Naive thymus-derived CD4-positive, alpha-beta T cell (primary cell): ENCODE measurements at regions of chr15 and their contacts with region 1.

Region 1: DNA sequence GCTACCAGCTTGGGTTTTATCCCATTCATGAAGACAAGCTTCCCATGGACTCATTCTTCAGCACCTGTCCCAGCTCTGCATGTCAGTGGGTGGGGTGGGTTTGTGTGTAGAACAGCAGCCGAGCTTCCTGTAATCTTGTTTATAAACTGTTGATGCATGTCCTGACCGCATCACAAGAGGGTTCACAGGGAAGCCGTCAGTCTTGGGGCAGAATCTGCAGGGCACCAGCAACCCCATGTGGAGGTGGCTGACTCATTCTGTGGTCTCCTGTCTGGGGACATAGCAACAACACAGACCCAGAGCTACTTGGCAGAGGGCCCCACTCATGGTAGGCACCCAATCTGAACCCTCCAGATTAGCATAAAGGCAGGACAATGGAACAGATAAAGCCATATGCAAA is 35.6 kb downstream of the DAPK2 start:
- DNase-seq: peak; percentile 43 to 92 (median 85)
- ATAC-seq: peak; percentile 98
- H3K4me3 ChIP-seq: no peak overlapping the region
- H3K4me3 Mint-ChIP-seq: peak overlapping the region; percentile 32 to 87 (median 62)
- H3K27ac ChIP-seq: peak overlapping the region; percentile 32
- H3K27ac Mint-ChIP-seq: peak overlapping the region; percentile 87 to 98 (median 95)
- H3K4me1 ChIP-seq: peaks cover 24 to 27% of the 10 kb centered on the region in 2 donors
- H3K4me1 Mint-ChIP-seq: peaks cover 20 to 64% (median 30%) of the 10 kb centered on the region in 7 donors
- H3K27me3 ChIP-seq: no peaks in the 10 kb centered on the region
- H3K27me3 Mint-ChIP-seq: peaks cover 0 to 3% (median 0%) of the 10 kb centered on the region in 5 donors

Region 2: DNA sequence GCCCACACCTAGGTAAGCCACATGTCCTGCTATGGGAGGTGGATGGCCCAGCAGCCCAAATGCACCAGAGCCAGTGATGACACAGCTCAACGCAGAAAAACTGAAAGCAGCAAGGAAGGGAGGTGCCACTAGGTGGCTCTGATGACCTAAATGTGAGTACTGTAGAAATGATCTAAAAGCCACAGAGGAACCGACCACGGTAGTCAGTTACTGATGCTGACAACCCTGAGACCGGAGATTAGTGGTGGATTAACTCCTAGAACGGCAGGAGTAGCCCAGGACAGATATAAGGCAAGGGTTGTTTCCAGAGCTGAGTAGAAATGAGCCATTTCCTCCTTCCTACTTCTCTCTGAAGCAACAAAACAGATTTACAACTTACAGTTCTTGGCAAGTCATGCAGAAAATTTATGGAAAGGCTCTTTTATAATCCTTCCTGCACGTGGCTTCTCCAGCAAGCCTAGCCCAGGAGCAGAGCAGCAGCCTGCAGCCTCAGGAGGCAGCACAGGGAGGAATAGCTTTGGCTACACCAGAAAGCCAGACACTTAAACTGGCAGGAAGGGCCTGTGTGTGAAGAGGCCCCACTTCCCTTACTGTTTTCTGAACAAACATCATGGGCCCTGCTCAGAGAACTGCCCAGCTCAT is 400.4 kb before region 1 on chr15:
- CTCF ChIA-PET with region 1: interaction called, 3 read pairs
- POLR2A ChIA-PET with region 1: no interaction called
- intact Hi-C with region 1: loop called in 1 of 2 experiments (anchors 1 kb)
- DNase-seq: peak in 8 of 9 donors; percentile 43 to 71 (median 64)
- ATAC-seq: peak; percentile 94
- H3K4me3 ChIP-seq: no peak overlapping the region
- H3K4me3 Mint-ChIP-seq: peak overlapping the region in 7 of 10 donors; percentile 9 to 68 (median 42)
- H3K27ac ChIP-seq: peak overlapping the region; percentile 69
- H3K27ac Mint-ChIP-seq: peak overlapping the region; percentile 74 to 94 (median 84)
- H3K4me1 ChIP-seq: peaks cover 23 to 25% of the 10 kb centered on the region in 2 donors
- H3K4me1 Mint-ChIP-seq: peaks cover 23 to 51% (median 41%) of the 10 kb centered on the region in 7 donors
- H3K27me3 ChIP-seq: no peaks in the 10 kb centered on the region
- H3K27me3 Mint-ChIP-seq: no peaks in the 10 kb centered on the region

Region 3: DNA sequence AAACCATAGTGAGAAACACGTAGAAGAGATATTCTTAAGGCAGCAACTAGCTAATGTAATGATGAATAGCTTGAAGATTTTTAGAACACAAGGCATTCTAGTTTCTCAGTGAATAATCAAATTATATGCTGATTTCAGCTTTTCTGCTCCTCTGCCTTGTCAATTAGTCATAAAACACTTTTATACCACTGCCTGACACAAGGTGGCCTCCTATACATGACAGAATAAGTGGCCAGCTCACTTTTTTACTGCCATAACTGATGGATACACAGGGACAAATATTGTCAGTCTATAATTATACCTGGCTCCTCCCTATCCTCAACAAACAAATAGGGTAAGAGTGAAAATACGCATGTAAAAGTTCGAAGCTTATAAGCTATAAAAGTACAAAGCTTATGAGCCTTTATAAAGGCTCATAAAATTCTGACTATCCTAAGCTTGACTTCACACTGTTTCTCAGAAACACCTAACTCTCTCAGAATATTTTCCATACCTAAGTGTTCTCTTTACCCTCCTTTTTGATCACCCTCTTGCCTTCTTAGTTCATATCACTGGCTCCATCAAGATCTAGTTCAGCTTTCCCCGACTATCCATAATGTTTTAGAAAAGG is 258.5 kb before region 1 on chr15:
- CTCF ChIA-PET with region 1: interaction called, 26 read pairs
- POLR2A ChIA-PET with region 1: interaction called, 3 read pairs
- intact Hi-C with region 1: loop called (anchors 1 to 2 kb)
- DNase-seq: peak in 7 of 9 donors; percentile 39 to 70 (median 59)
- ATAC-seq: peak; percentile 93
- H3K4me3 ChIP-seq: no peak overlapping the region
- H3K4me3 Mint-ChIP-seq: no peak overlapping the region
- H3K27ac ChIP-seq: no peak overlapping the region
- H3K27ac Mint-ChIP-seq: peak overlapping the region in 7 of 9 donors; percentile 5 to 83 (median 63)
- H3K4me1 ChIP-seq: no peaks in the 10 kb centered on the region
- H3K4me1 Mint-ChIP-seq: peaks cover 0 to 9% (median 2%) of the 10 kb centered on the region in 7 donors
- H3K27me3 ChIP-seq: no peaks in the 10 kb centered on the region
- H3K27me3 Mint-ChIP-seq: no peaks in the 10 kb centered on the region

Region 4: DNA sequence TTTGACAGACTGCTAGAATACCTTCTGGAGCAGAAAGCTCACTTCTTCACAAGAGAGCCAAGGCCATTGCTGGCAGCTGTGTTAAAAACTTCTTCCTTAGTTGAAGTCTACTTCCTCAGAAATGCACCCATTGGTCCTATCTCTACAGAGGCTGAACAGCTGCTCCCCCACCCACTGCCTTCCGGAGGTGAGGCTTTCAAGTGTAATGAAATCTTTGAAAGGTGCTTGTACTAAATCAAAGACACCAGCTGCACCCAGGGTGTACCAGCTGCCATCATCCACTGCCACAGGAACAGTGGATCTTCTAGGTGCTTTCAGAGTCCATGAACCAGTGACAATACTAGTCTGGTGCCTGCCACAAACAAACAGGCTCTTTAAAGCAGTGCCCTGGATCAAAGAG is 150.6 kb before region 1 on chr15:
- CTCF ChIA-PET with region 1: no interaction called
- POLR2A ChIA-PET with region 1: interaction called, 3 read pairs
- intact Hi-C with region 1: loop called in 1 of 2 experiments (anchors 1 kb)
- DNase-seq: peak; percentile 27 to 90 (median 83)
- ATAC-seq: peak; percentile 95
- H3K4me3 ChIP-seq: no peak overlapping the region
- H3K4me3 Mint-ChIP-seq: peak overlapping the region; percentile 54 to 85 (median 76)
- H3K27ac ChIP-seq: peak overlapping the region; percentile 76
- H3K27ac Mint-ChIP-seq: peak overlapping the region; percentile 87 to 99 (median 97)
- H3K4me1 ChIP-seq: peaks cover 7 to 42% of the 10 kb centered on the region in 2 donors
- H3K4me1 Mint-ChIP-seq: peaks cover 29 to 78% (median 73%) of the 10 kb centered on the region in 7 donors
- H3K27me3 ChIP-seq: no peaks in the 10 kb centered on the region
- H3K27me3 Mint-ChIP-seq: no peaks in the 10 kb centered on the region

Region 5: GRCh38 chr15:63945007-63945788 is 65.5 kb before region 1 on chr15:
- CTCF ChIA-PET with region 1: interaction called, 8 read pairs
- POLR2A ChIA-PET with region 1: no interaction called
- intact Hi-C with region 1: loop called (anchors 1 kb)
- DNase-seq: peak; percentile 21 to 68 (median 48)
- ATAC-seq: peak; percentile 94
- H3K4me3 ChIP-seq: no peak overlapping the region
- H3K4me3 Mint-ChIP-seq: no peak overlapping the region
- H3K27ac ChIP-seq: no peak overlapping the region
- H3K27ac Mint-ChIP-seq: peak overlapping the region in 5 of 9 donors; percentile 5 to 75 (median 15)
- H3K4me1 ChIP-seq: peaks cover 0 to 6% of the 10 kb centered on the region in 2 donors
- H3K4me1 Mint-ChIP-seq: peaks cover 1 to 33% (median 6%) of the 10 kb centered on the region in 7 donors
- H3K27me3 ChIP-seq: no peaks in the 10 kb centered on the region
- H3K27me3 Mint-ChIP-seq: no peaks in the 10 kb centered on the region

Region 6: DNA sequence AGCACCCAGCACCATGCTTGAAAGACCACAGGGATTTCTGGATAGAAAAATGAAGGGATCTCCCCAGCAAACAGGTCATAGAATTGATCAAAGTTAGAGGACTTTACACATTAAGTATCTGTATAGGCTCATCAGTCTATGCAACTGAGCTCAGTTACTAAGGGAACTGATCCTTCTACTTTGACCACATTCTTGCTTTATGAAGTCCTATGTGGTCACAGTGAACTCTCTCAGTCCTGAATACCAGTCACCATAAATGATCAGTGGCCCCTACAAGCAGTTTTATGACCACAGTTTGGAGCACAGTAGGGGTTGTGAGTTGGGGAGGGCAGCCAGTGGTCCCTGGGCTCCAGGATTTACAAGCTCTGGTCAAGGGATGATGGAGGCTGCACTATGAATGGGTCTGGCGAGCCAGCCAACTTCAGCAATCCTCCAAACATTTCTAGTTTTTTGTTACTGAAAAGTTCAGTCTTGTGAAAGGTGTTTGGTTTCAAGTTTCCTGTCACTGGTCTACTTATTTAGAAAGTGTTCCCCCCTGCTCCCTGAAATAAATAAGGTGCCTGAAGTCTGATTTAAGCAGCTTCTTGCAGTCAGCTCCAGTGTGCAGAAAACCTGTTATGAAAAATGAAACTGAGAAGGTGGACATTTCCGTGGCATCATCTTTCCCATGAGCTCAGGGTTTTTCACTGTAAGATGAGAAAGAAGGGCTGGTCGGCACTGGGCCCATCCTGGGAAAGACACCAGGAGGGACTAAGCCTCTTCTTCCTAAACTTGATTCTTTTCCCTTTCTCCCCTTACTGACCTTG is 39.9 kb before region 1 on chr15:
- CTCF ChIA-PET with region 1: interaction called, 5 read pairs
- POLR2A ChIA-PET with region 1: no interaction called
- intact Hi-C with region 1: loop called in 1 of 2 experiments (anchors 1 kb)
- DNase-seq: peak in 4 of 9 donors; percentile 3 to 44 (median 10)
- ATAC-seq: peak; percentile 52
- H3K4me3 ChIP-seq: peak overlapping the region; percentile 17
- H3K4me3 Mint-ChIP-seq: peak overlapping the region; percentile 6 to 87 (median 54)
- H3K27ac ChIP-seq: peak overlapping the region; percentile 1
- H3K27ac Mint-ChIP-seq: peak overlapping the region; percentile 73 to 99 (median 83)
- H3K4me1 ChIP-seq: peaks cover 20 to 24% of the 10 kb centered on the region in 2 donors
- H3K4me1 Mint-ChIP-seq: peaks cover 24 to 46% (median 30%) of the 10 kb centered on the region in 7 donors
- H3K27me3 ChIP-seq: no peaks in the 10 kb centered on the region
- H3K27me3 Mint-ChIP-seq: no peaks in the 10 kb centered on the region

Region 7: DNA sequence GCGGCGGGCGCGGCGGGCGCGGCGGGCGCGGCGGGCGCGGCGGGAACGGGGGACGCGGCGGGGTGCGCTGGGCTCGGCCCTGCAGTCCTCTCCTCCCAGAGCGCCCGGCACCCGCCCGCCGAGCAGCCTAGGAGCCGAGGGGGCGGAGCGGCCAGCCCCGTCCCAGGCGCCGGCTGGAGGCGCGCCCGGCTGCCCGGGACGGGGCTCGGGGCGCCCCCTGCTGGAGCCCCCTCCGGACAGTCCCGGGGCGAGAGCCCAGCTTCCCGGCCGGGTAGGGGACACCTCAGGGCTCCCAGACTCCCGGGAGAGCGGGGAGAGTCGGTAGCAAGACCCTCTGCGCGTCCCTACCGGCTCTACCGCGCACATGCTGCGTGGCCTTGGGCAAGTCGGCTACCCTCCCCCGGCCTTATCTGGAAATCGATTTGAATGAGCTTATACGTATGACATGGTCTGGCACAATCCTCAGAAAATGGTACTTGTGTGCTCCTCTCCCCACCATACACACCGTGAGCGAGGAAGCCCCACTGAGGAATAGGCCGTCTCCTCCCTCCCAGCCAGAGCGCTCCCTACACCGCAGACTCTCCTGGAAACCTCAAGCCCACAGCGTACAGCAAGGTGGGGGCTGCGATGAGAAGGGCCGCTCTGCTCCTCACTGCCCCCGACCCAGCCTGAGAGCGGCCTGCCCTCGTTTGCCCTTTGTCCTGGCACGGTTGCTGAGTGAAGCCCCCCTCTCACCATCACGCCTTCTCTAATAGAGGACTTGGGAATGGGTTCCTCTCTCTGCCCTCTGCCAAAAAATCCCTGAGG is 35.8 kb after region 1 on chr15 and contains the start of gene DAPK2:
- CTCF ChIA-PET with region 1: interaction called, 4 read pairs
- POLR2A ChIA-PET with region 1: no interaction called
- intact Hi-C with region 1: loop called in 1 of 2 experiments (anchors 1 kb)
- DNase-seq: peak; percentile 29 to 83 (median 63)
- ATAC-seq: peak; percentile 91
- H3K4me3 ChIP-seq: peak within 1 kb of the TSS; percentile 55
- H3K4me3 Mint-ChIP-seq: peak within 1 kb of the TSS; percentile 74 to 85 (median 82)
- H3K27ac ChIP-seq: no peak within 1 kb of the TSS
- H3K27ac Mint-ChIP-seq: peak within 1 kb of the TSS in 5 of 9 donors; percentile 28 to 88 (median 61)
- H3K4me1 ChIP-seq: peaks cover 0 to 5% of the 10 kb centered on the region in 2 donors
- H3K4me1 Mint-ChIP-seq: peaks cover 5 to 30% (median 10%) of the 10 kb centered on the region in 7 donors
- H3K27me3 ChIP-seq: no peaks in the 10 kb centered on the region
- H3K27me3 Mint-ChIP-seq: peaks cover 4 to 41% (median 13%) of the 10 kb centered on the region in 5 donors
- total RNA-seq, gene DAPK2: 0.46 to 9.3 (median 4.2) TPM in 4 of 5 experiments, not detected in the other